ENCODE measurements at regions of chr19 and their contacts with region 1.

Region 1: GRCh38 chr19:16076154-16076957 is at the start of gene TPM4:
- DNase-seq: peak; percentile 94
- ATAC-seq: peak; percentile 42
- H3K4me3 Mint-ChIP-seq: peak within 1 kb of the TSS; percentile 99
- H3K27ac Mint-ChIP-seq: peak within 1 kb of the TSS; percentile 98
- H3K4me1 Mint-ChIP-seq: peaks cover 64% of the 10 kb centered on the region
- H3K27me3 Mint-ChIP-seq: no peaks in the 10 kb centered on the region
- total RNA-seq, gene TPM4: 362 to 416 TPM

Region 2: DNA sequence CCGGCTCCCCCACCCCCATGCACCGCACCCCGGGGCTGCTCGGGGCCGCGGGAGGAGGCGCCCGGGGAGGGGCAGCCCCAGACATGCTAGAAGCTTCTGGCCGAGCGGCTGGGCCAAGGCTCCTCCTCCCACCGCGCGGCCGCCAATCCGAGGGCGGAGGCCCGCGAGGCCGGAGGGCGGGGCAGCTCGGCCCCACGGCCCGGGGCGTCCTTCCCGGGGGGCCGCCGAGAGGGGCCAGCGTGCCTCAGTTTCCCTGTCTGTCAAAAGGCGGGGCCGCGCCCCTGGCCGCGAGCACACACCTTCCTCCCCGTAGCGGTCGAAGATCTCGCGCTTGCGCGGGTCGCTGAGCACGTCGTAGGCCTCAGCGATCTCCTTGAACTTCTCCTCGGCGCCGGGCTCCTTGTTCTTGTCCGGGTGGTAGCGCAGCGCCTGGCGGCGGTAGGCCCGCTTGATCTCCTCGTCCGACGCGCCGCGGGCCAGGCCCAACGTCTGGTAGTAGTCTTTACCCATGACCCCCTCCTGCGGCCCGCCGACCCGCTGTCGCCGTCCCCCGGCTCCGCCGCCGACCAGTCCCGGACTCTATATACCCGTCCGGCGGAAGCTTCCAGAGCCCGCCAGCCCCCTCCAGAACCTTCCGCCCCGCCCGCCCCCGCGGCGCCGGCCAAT is 1558.4 kb before region 1 on chr19 and contains the start of gene DNAJB1:
- CTCF ChIA-PET with region 1: no interaction called
- POLR2A ChIA-PET with region 1: no interaction called
- intact Hi-C with region 1: loop called in 1 of 2 experiments (anchors 5 kb)
- DNase-seq: peak; percentile 81
- ATAC-seq: peak; percentile 56
- H3K4me3 Mint-ChIP-seq: peak within 1 kb of the TSS; percentile 94
- H3K27ac Mint-ChIP-seq: peak within 1 kb of the TSS; percentile 94
- H3K4me1 Mint-ChIP-seq: peaks cover 60% of the 10 kb centered on the region
- H3K27me3 Mint-ChIP-seq: no peaks in the 10 kb centered on the region
- total RNA-seq, gene DNAJB1: 69.3 to 72.6 TPM

Region 3: GRCh38 chr19:15466851-15467733 is 609.3 kb before region 1 on chr19:
- CTCF ChIA-PET with region 1: no interaction called
- POLR2A ChIA-PET with region 1: no interaction called
- intact Hi-C with region 1: loop called in 1 of 2 experiments (anchors 10 kb)
- DNase-seq: peak; percentile 80
- ATAC-seq: peak; percentile 62
- H3K4me3 Mint-ChIP-seq: peak overlapping the region; percentile 47
- H3K27ac Mint-ChIP-seq: peak overlapping the region; percentile 95
- H3K4me1 Mint-ChIP-seq: peaks cover 62% of the 10 kb centered on the region
- H3K27me3 Mint-ChIP-seq: peaks cover 3% of the 10 kb centered on the region

Region 4: DNA sequence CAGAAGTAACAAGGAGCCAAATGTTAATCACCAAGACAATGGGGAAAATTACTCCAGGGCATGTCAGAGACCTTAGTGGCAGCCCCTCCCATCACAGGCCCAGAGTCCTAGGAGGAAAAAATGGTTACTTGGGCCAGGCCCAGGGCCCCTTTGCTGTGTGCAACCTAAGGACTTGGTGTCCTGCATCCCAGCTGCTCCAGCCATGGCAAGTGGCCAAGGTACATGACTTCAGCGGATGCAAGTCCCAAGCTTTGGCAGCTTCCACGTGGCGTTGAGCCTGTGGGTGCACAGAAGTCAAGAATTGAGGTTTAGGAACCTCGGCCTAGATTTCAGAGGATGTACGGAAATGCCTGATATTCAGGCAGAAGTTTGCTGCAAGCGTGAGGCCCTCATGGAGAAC is 80.8 kb before region 1 on chr19:
- CTCF ChIA-PET with region 1: no interaction called
- POLR2A ChIA-PET with region 1: no interaction called
- intact Hi-C with region 1: no loop called
- DNase-seq: no peak
- ATAC-seq: no peak
- H3K4me3 Mint-ChIP-seq: no peak overlapping the region
- H3K27ac Mint-ChIP-seq: no peak overlapping the region
- H3K4me1 Mint-ChIP-seq: peaks cover 3% of the 10 kb centered on the region
- H3K27me3 Mint-ChIP-seq: peaks cover 12% of the 10 kb centered on the region

Region 5: GRCh38 chr19:16062789-16063188 is 13.6 kb before region 1 on chr19:
- CTCF ChIA-PET with region 1: interaction called, 18 read pairs
- POLR2A ChIA-PET with region 1: no interaction called
- intact Hi-C with region 1: loop called in 1 of 2 experiments (anchors 2 kb)
- DNase-seq: peak; percentile 84
- ATAC-seq: peak; percentile 38
- H3K4me3 Mint-ChIP-seq: no peak overlapping the region
- H3K27ac Mint-ChIP-seq: no peak overlapping the region
- H3K4me1 Mint-ChIP-seq: peaks cover 24% of the 10 kb centered on the region
- H3K27me3 Mint-ChIP-seq: no peaks in the 10 kb centered on the region

Region 6: GRCh38 chr19:16330368-16330801 is 254.0 kb after region 1 on chr19:
- CTCF ChIA-PET with region 1: interaction called, 3 read pairs
- POLR2A ChIA-PET with region 1: no interaction called
- intact Hi-C with region 1: loop called in 1 of 2 experiments (anchors 2 kb)
- DNase-seq: peak; percentile 98
- ATAC-seq: peak; percentile 90
- H3K4me3 Mint-ChIP-seq: peak overlapping the region; percentile 33
- H3K27ac Mint-ChIP-seq: peak overlapping the region; percentile 17
- H3K4me1 Mint-ChIP-seq: peaks cover 62% of the 10 kb centered on the region
- H3K27me3 Mint-ChIP-seq: peaks cover 28% of the 10 kb centered on the region

Region 7: GRCh38 chr19:17419621-17420466 is 1343.5 kb after region 1 on chr19 and contains the start of gene MVB12A:
- CTCF ChIA-PET with region 1: no interaction called
- POLR2A ChIA-PET with region 1: no interaction called
- intact Hi-C with region 1: loop called in 1 of 2 experiments (anchors 5 kb)
- DNase-seq: peak; percentile 97
- ATAC-seq: peak; percentile 95
- H3K4me3 Mint-ChIP-seq: peak within 1 kb of the TSS; percentile 91
- H3K27ac Mint-ChIP-seq: peak within 1 kb of the TSS; percentile 87
- H3K4me1 Mint-ChIP-seq: peaks cover 11% of the 10 kb centered on the region
- H3K27me3 Mint-ChIP-seq: no peaks in the 10 kb centered on the region
- total RNA-seq, gene MVB12A: 27.6 to 32.6 TPM

Measured in activated CD4-positive, alpha-beta T cell treated with anti-CD3 and anti-CD28 coated beads for 36 hours (primary cell).